AG04449 (cell line): ENCODE measurements at regions of chr3 and their contacts with region 1.

Region 1: DNA sequence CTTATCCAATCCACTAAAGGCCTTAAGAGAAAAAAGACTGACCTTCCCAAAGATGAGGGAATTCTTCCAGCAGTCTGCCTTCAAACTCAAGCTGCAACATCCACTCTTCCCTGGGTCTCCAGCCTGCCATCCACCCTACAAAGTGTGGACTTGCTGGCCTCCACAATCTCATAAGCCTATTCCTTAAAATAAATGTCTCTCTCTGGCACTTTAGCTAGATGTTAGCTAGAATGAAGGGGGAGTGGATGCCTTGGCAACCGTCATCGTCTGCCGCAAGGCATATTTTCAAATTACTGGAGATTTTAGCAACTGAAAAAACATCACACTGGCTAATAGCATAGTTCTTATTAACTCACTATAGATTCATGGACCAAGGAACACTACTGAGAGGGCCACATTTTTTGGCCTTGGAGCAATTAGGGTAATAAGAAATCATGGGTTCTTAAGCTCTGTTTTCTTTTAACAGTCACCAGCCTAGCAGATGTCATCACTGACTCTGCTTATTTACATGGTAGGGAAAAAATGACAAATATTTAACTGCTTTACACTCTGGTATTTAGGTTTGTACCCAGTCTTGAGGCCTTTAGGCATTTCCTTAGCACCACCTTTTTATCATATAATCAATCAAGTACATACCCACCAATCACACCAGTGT is 245.3 kb downstream of the MYRIP start:
- DNase-seq: peak; percentile 91
- H3K4me3 ChIP-seq: no peak overlapping the region
- CTCF ChIP-seq: no peak

Region 2: DNA sequence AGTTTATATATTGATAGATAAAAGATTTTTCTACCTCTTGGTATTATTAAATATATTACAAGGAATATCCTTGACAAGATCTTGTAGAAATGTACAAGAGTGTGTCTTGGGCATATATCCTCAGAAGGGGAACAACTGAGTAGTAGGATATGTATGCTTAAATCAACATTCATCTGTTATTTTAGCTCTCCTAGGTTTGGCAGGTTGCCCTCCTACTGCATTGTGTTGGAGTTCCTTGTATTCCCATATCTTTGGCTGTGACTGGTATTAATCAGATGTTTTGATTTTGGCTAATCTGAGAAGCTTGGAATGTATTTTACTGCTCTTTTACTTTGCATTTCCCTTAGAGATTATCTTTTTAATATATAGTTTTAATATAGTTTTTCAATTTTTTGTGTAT is 240.7 kb before region 1 on chr3:
- CTCF ChIA-PET with region 1: no interaction called
- POLR2A ChIA-PET with region 1: no interaction called
- DNase-seq: peak; percentile 29
- H3K4me3 ChIP-seq: no peak overlapping the region
- CTCF ChIP-seq: no peak

Region 3: DNA sequence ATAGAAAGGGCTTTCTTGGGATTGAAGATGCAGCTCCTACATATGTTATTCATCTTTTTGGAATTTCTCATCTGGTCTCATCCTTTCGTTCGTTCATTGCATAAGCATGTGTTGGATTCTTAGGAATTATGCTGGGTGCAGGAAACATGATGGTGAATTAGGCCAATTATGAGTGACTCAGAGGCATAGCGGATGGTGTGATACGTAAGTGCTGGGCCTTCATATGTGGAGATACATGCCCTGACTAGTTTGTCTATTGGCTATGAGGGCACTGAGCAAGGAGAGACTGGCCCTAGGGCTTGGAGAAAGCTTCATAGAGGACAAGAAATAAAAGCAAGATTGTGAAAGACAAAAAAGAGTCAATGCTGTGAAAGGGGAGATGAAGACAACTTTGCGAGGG is 10.2 kb before region 1 on chr3:
- CTCF ChIA-PET with region 1: interaction called, 8 read pairs
- POLR2A ChIA-PET with region 1: interaction called, 12 read pairs
- DNase-seq: peak; percentile 99
- H3K4me3 ChIP-seq: no peak overlapping the region
- CTCF ChIP-seq: no peak

Region 4: GRCh38 chr3:40079203-40079846 is 24.6 kb after region 1 on chr3:
- CTCF ChIA-PET with region 1: interaction called, 11 read pairs
- POLR2A ChIA-PET with region 1: interaction called, 3 read pairs
- DNase-seq: peak; percentile 91
- H3K4me3 ChIP-seq: no peak overlapping the region
- CTCF ChIP-seq: no peak